ENCODE measurements at regions of chr6 and their contacts with region 1.

Region 1: GRCh38 chr6:52049252-52050050 is 38.0 kb downstream of the PKHD1 start:
- DNase-seq: peak in 2 of 5 donors; percentile 66 to 67
- H3K4me3 ChIP-seq: no peak overlapping the region
- H3K27ac ChIP-seq: no peak overlapping the region
- H3K4me1 ChIP-seq: peaks cover 0 to 10% (median 3%) of the 10 kb centered on the region in 3 donors
- H3K27me3 ChIP-seq: no peaks in the 10 kb centered on the region
- CTCF ChIP-seq: peak; percentile 47

Region 2: GRCh38 chr6:50816115-50816675 is 1233.3 kb before region 1 on chr6:
- intact Hi-C with region 1: loop called (anchors 10 kb)
- DNase-seq: peak; percentile 71 to 90 (median 86)
- H3K4me3 ChIP-seq: peak overlapping the region; percentile 61 to 85 (median 85)
- H3K27ac ChIP-seq: peak overlapping the region in 1 of 2 donors; percentile 54
- H3K4me1 ChIP-seq: peaks cover 0 to 3% (median 0%) of the 10 kb centered on the region in 3 donors
- H3K27me3 ChIP-seq: peaks cover 27% of the 10 kb centered on the region
- CTCF ChIP-seq: peak; percentile 78

Region 3: DNA sequence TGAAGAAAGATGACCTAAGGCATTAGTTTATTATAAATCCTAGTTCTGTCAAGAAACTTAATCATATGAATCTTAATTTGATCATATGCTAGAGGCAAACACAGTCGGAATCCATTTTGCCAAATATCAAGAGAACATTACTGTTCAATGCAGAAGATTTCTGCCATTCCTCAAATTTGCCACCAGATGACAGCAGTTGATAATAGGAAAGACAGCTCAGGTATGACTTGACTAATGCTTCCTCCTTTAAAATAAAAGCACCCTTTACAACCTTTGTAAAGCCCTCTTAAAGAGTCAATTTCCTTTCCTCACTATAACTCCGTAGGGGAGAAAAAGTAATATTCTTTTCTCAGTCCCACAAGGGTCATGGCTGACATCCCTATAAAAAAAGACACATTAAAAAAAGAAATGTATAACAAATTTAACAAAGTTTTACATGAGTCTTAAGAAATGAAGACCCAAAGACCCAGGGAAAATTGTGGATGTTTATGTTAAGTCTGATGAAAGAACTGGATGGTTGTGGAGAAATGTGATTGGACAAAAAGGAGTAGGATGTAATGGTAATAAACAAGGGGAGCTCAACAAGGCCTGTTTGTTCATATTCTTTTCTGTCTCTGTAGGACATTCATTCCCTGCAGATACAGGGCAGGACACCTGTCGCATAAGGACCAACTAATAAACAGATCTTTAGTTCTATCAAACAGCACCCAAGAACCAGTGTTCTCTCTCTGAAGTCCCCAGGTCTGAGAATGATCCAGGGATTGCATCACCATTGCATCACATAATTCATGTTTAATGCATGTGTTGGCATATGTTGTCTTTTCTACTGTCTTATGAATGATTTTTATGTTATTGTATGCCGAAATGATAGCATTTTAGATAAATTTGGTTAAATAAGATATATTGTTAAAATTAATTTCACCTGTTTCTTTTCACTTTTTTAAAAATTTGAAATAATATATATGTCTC is 113.8 kb after region 1 on chr6:
- intact Hi-C with region 1: no loop called
- DNase-seq: peak in 1 of 5 donors; percentile 29
- H3K4me3 ChIP-seq: no peak overlapping the region
- H3K27ac ChIP-seq: no peak overlapping the region
- H3K4me1 ChIP-seq: no peaks in the 10 kb centered on the region
- H3K27me3 ChIP-seq: no peaks in the 10 kb centered on the region
- CTCF ChIP-seq: peak; percentile 87